Calu3 (cell line): ENCODE measurements at regions of chr10 and their contacts with region 1.

Region 1: DNA sequence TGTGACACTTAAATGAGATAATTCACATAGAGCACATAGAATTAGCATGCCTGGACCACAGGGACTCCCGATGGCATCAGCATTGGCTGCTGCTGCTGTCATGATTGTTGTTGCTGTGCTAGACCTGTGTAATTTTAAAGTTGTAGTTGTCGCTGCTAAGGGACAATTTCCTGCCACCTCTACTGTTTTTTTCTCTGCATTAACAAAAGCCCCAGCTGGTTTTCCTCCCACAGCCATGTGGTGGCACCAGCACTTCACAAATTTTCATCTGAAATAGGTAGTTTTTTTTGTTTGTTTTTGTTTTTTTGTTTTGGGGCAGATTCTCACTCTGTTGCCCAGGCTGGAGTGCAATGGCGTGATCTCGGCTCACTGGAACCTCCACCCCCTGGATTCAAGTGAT is 25.4 kb upstream of the PRXL2A start:
- DNase-seq: peak; percentile 55
- H3K4me3 Mint-ChIP-seq: no peak overlapping the region
- H3K27ac Mint-ChIP-seq: no peak overlapping the region
- H3K4me1 Mint-ChIP-seq: peaks cover 7% of the 10 kb centered on the region
- H3K27me3 Mint-ChIP-seq: no peaks in the 10 kb centered on the region
- CTCF ChIP-seq: peak; percentile 62

Region 2: GRCh38 chr10:80015911-80016830 is 366.8 kb before region 1 on chr10:
- CTCF ChIA-PET with region 1: no interaction called
- intact Hi-C with region 1: no loop called
- DNase-seq: no peak
- H3K4me3 Mint-ChIP-seq: no peak overlapping the region
- H3K27ac Mint-ChIP-seq: no peak overlapping the region
- H3K4me1 Mint-ChIP-seq: no peaks in the 10 kb centered on the region
- H3K27me3 Mint-ChIP-seq: no peaks in the 10 kb centered on the region
- CTCF ChIP-seq: no peak

Region 3: GRCh38 chr10:80477813-80478212 is 94.8 kb after region 1 on chr10:
- CTCF ChIA-PET with region 1: no interaction called
- intact Hi-C with region 1: no loop called
- DNase-seq: no peak
- H3K4me3 Mint-ChIP-seq: no peak overlapping the region
- H3K27ac Mint-ChIP-seq: no peak overlapping the region
- H3K4me1 Mint-ChIP-seq: peaks cover 43% of the 10 kb centered on the region
- H3K27me3 Mint-ChIP-seq: no peaks in the 10 kb centered on the region
- CTCF ChIP-seq: no peak

Region 4: DNA sequence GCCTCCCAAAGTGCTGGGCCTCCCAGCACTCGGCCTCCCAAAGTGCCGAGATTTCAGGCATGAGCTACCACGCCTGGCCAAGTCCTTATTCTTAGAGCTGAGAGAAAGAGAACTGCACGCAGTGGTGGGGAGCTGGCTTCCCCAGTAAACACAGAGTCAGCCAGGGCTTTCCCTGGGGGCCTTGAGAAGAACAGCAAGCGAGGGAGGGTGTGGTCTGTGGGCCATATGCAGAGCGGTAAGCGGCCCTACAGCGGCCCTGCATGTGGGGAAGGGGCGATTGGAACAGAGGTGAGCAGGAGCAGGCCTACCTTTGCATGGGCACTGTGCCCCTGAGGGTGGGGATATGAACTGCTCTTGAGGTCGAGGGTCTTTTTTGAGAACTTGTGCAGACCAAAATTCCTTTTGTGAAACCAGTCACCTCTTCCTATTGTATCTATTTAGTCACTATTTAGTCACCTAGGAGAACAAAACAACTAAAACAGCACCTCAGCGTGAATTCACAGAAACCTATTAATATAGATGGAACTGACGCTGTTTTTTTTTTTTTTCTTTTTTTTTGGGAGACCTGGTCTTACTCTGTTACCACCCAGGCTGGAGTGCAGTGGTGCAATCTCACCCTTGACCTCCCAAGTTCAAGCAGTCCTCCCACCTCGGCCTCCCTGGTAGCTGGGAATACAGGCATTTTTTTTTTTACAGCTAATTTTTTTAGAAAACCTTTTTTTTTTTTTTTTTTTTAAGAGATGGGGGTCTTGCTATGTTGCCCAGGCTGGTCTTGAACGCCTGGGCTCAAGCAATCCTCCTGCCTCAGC is 117.8 kb after region 1 on chr10:
- CTCF ChIA-PET with region 1: interaction called, 14 read pairs
- intact Hi-C with region 1: loop called (anchors 5 kb)
- DNase-seq: no peak
- H3K4me3 Mint-ChIP-seq: peak overlapping the region; percentile 34
- H3K27ac Mint-ChIP-seq: peak overlapping the region; percentile 42
- H3K4me1 Mint-ChIP-seq: peaks cover 96% of the 10 kb centered on the region
- H3K27me3 Mint-ChIP-seq: no peaks in the 10 kb centered on the region
- CTCF ChIP-seq: no peak

Region 5: GRCh38 chr10:80530251-80530650 is 147.3 kb after region 1 on chr10:
- CTCF ChIA-PET with region 1: no interaction called
- intact Hi-C with region 1: loop called (anchors 1 kb)
- DNase-seq: peak; percentile 77
- H3K4me3 Mint-ChIP-seq: no peak overlapping the region
- H3K27ac Mint-ChIP-seq: no peak overlapping the region
- H3K4me1 Mint-ChIP-seq: no peaks in the 10 kb centered on the region
- H3K27me3 Mint-ChIP-seq: no peaks in the 10 kb centered on the region
- CTCF ChIP-seq: peak; percentile 72

Region 6: GRCh38 chr10:80924063-80924952 is 541.3 kb after region 1 on chr10:
- CTCF ChIA-PET with region 1: no interaction called
- intact Hi-C with region 1: loop called (anchors 5 kb)
- DNase-seq: peak; percentile 71
- H3K4me3 Mint-ChIP-seq: no peak overlapping the region
- H3K27ac Mint-ChIP-seq: no peak overlapping the region
- H3K4me1 Mint-ChIP-seq: no peaks in the 10 kb centered on the region
- H3K27me3 Mint-ChIP-seq: peaks cover 22% of the 10 kb centered on the region
- CTCF ChIP-seq: peak; percentile 65